HEK293 (cell line): ENCODE measurements at regions of chr5 and their contacts with region 1.

Region 1: DNA sequence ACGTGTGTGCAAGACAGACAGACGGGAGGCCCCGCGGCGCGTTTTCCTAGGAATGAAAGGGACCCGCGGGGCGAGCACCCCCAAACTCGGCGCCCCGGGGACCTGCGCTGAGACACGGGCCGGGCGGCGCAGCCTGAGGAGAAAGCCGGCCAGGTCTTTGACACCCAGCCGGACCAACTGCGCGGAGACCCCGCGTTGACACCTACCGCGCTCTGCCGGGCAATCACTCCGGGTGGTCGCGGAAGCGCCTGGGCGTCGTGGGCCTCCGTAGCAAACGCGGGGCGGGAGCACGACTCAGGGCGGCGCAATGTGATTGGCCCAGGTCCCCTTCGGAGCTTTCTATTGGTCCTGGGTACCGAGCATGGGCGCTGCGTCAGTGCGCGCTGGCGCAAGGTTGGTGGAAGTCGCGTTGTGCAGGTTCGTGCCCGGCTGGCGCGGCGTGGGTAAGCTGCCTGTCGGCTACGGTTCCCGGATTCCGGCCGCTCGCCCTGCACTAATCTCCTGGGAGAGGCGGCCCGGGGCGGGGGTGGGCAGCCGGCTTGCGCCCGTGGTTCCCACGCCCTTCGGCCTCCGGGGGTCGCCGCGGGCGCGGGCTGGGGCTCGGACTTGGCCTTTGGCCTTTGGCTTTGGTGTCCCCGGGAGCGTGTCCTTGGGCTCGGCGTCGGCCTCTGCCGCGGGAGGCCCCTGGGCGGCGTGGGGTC is at the starts of genes FASTKD3 and MTRR:
- H3K4me3 ChIP-seq: peak within 1 kb of the TSS; percentile 96
- H3K27ac ChIP-seq: peak within 1 kb of the TSS; percentile 66; the same call in 1 of the 2 replicates
- H3K4me1 ChIP-seq: peaks cover 17% of the 10 kb centered on the region
- CTCF ChIP-seq: no peak; the same call in 1 of the 2 replicates

Region 2: DNA sequence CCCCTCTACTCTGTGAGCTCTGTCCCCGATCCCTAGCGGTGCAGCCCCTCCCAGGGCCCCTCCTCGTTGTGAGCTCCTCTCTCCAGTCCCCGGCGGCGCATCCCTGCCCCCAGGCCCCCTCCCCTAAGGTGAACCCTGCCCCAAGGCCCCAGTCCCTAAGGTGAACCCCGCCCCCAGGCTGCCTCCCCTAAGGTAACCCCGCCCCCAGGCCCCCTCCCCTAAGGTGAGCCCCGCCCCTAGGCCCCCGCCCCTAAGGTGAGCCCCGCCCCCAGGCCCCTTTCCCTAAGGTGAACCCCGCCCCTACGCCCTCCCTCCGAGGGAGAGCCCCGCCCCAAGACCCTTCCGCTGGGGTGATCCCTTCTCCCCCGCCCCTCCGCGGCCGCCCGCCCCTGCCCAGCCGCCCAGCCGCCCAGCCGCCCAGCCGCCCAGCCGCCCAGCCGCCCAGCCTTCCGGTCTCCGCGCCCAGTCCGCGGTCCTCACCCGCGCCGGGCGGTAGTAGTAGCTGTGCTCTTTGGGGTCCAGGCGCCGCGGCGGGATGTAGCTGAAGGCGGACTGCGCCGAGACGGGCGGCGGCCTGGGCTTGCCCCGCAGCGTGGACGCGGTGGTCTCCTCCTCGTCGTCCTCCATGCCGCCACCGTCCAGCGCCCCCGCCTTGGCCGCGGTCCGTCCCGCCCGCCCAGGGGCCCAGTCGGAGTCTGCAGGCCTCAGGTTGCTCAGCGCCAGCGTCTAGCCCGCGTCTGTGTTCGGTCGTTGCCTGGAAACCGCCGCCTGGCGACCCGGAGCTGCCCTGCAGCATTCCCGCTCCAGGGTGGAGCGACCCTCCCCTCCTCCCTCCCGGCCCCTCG is 18.3 kb before region 1 on chr5 and contains the start of gene CFAP90:
- CTCF ChIA-PET with region 1: interaction called, 17 read pairs
- POLR2A ChIA-PET with region 1: interaction called, 22 read pairs
- H3K4me3 ChIP-seq: peak within 1 kb of the TSS; percentile 65
- H3K27ac ChIP-seq: no peak within 1 kb of the TSS; the same call in 1 of the 2 replicates
- H3K4me1 ChIP-seq: no peaks in the 10 kb centered on the region
- CTCF ChIP-seq: peak; percentile 68

Region 3: GRCh38 chr5:7886849-7887475 is 18.0 kb after region 1 on chr5:
- CTCF ChIA-PET with region 1: interaction called, 32 read pairs
- POLR2A ChIA-PET with region 1: interaction called, 22 read pairs
- H3K4me3 ChIP-seq: no peak overlapping the region
- H3K27ac ChIP-seq: no peak overlapping the region
- H3K4me1 ChIP-seq: no peaks in the 10 kb centered on the region
- CTCF ChIP-seq: 0 out of 2 replicates have a peak, but pooled peaks have one; percentile 11